ENCODE measurements at regions of chr5 and their contacts with region 1.

Region 1: DNA sequence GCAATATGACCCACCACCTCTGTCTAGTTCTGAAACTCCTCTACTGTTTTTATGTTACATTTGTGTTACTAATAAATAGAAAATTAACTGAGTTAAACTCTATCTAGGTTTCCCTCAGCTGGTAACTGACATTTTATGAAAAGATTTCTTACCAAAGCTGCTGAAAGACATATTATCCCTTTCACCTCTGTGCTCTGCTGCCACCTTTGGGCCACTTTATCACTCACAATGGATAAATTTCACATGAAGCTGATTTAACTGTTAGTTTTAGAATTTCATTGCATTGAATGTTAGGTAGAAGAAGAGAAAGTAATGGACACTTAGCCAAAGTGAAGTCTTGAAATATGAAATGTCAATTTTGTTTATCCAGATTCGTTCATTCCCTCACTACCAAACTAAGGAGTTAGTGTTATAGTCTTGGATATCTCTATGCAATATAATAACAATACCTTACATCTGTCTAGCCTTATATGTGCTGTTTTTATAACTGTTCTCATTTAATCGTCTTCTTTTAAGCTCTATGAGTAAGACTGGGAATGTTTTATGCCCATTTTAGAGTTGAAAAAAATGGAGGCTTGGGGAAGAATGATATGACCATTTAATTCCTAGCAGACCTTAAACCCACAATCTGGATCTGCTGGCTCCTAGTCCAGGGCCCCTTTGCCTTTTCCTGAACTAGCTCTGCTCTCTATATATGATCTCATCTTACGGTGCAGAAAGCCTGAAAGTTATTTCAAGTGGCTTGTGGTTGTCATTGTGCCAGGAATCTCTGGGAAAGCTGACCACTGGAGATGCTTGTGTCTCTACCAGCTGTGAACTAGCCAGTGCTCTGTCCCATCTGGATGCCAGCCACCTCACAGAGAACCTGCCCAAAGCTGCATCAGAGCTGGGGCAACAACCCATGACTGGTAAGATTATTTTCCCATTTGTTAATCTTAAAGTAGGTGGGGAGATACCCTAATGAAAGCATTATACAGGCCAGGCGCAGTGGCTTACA is 97.1 kb downstream of the GOLPH3 start:
- DNase-seq: peak in 6 of 7 donors; percentile 33 to 72 (median 50)
- H3K4me3 ChIP-seq: no peak overlapping the region
- H3K27ac ChIP-seq: no peak overlapping the region
- H3K4me1 ChIP-seq: no peaks in the 10 kb centered on the region
- H3K27me3 ChIP-seq: no peaks in the 10 kb centered on the region
- CTCF ChIP-seq: peak; percentile 55 to 80 (median 76)
- POLR2A ChIP-seq: no peak

Region 2: DNA sequence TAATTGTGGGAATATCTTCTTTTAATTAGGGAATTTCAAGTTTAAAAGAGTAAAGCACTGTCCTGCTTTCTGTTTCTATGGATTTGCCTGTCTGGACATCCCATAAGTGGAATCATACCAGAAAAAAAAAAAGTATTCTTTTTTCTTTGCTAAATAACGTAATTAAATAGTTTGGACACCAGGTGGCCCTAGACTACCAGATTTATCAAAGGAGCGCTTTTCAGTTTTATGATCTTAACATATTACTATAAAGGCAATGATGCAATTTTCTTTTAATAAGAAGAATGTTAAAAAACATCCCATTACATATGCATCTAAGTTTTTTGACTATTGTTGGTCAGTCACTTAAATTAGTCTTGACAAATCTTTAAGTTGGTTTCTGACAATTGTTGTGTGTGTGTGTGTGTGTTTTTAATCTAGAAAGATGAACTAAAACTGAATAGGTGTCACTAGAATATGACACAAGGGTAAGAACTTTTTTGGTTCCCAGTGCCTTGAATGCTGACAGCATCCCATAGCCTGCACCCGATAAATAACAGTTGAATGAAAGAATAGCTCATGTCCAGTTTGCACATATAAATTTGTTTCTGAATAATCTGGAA is 495.4 kb before region 1 on chr5:
- intact Hi-C with region 1: loop called (anchors 10 kb)
- DNase-seq: peak in 1 of 7 donors; percentile 18
- H3K4me3 ChIP-seq: no peak overlapping the region
- H3K27ac ChIP-seq: no peak overlapping the region
- H3K4me1 ChIP-seq: no peaks in the 10 kb centered on the region
- H3K27me3 ChIP-seq: peaks cover 3% of the 10 kb centered on the region
- CTCF ChIP-seq: peak; percentile 51 to 67 (median 61)
- POLR2A ChIP-seq: no peak

Region 3: DNA sequence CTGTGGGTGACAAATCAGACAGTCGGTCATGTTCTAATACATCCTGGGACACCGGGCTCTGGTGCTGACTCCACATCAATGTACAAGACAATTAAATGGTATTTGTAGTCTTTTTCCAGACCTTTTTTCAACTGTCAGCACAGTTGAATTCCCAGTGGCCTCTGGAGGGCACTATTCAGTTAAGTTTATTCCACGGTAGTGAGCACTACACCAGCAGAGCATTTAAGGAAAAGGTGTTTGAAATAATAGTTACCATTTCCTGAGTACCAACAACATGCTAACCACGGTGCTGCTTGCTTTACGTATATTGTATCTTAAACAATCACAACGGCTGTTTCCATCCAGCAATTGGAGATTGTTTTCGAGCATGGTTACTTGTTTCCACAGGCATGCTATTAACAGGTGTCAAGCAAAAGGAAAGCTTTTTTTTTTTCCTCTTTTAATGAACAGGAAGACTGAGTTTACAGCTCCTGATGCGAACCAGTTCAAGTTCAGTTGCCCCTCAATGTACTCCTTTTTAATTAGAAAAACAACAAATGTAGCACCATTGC is 251.4 kb before region 1 on chr5:
- intact Hi-C with region 1: loop called (anchors 5 kb)
- DNase-seq: peak; percentile 26 to 75 (median 42)
- H3K4me3 ChIP-seq: no peak overlapping the region
- H3K27ac ChIP-seq: no peak overlapping the region
- H3K4me1 ChIP-seq: no peaks in the 10 kb centered on the region
- H3K27me3 ChIP-seq: no peaks in the 10 kb centered on the region
- CTCF ChIP-seq: peak; percentile 35 to 71 (median 66)
- POLR2A ChIP-seq: no peak

Region 4: DNA sequence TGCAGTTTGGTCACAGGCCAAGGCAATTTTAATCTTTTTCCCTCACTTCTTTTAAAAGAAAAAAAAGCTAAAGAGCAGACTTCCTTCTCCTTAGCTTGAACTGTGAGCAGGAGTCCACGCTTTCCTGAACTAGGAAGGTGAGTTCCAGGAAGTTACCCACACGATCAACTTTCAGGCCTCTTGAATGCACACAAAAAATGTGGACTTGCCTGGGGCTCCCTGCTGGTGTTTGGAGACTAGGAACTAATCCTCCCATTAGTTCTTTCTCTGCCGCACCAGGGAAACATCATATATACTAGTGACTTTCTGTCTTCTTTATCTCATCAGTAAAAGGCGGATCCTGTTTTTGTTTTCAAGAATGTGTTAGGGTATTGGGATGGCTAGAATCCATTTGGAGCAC is 142.8 kb before region 1 on chr5:
- intact Hi-C with region 1: loop called in 1 of 2 experiments (anchors 5 kb)
- DNase-seq: no peak
- H3K4me3 ChIP-seq: no peak overlapping the region
- H3K27ac ChIP-seq: no peak overlapping the region
- H3K4me1 ChIP-seq: no peaks in the 10 kb centered on the region
- H3K27me3 ChIP-seq: no peaks in the 10 kb centered on the region
- CTCF ChIP-seq: no peak
- POLR2A ChIP-seq: no peak

Region 5: DNA sequence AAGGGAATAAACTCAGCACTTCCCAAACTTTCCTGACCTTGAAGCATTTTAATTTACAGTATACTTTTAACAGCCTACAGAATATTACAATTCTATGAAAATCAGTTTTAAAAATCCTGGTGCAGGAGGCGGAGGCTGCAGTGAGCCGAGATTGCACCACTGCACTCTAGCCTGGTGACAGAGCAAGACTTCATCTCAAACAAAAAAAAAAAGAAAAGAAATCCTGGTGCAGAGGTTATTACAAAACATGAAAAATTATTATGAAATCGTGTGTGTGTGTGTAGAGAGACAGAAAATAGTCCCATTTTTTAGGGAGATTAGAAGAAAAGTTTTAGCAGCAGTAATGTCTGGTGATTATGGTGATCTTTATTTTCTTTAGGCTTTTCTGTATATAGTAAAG is 70.2 kb after region 1 on chr5:
- intact Hi-C with region 1: no loop called
- DNase-seq: peak in 1 of 7 donors; percentile 56
- H3K4me3 ChIP-seq: no peak overlapping the region
- H3K27ac ChIP-seq: no peak overlapping the region
- H3K4me1 ChIP-seq: peaks cover 6 to 77% of the 10 kb centered on the region in 2 donors
- H3K27me3 ChIP-seq: no peaks in the 10 kb centered on the region
- CTCF ChIP-seq: no peak
- POLR2A ChIP-seq: no peak